ENCODE measurements at regions of chr10 and their contacts with region 1.

Region 1: GRCh38 chr10:63866075-63866746 is 345.0 kb downstream of the REEP3 start:
- DNase-seq: peak; percentile 39
- H3K4me3 Mint-ChIP-seq: no peak overlapping the region
- H3K27ac Mint-ChIP-seq: no peak overlapping the region
- H3K4me1 Mint-ChIP-seq: peaks cover 6% of the 10 kb centered on the region
- H3K27me3 Mint-ChIP-seq: peaks cover 22% of the 10 kb centered on the region

Region 2: GRCh38 chr10:63878428-63878827 is 12.2 kb after region 1 on chr10:
- CTCF ChIA-PET with region 1: interaction called, 13 read pairs
- POLR2A ChIA-PET with region 1: no interaction called
- DNase-seq: no peak
- H3K4me3 Mint-ChIP-seq: no peak overlapping the region
- H3K27ac Mint-ChIP-seq: no peak overlapping the region
- H3K4me1 Mint-ChIP-seq: no peaks in the 10 kb centered on the region
- H3K27me3 Mint-ChIP-seq: peaks cover 11% of the 10 kb centered on the region

Region 3: DNA sequence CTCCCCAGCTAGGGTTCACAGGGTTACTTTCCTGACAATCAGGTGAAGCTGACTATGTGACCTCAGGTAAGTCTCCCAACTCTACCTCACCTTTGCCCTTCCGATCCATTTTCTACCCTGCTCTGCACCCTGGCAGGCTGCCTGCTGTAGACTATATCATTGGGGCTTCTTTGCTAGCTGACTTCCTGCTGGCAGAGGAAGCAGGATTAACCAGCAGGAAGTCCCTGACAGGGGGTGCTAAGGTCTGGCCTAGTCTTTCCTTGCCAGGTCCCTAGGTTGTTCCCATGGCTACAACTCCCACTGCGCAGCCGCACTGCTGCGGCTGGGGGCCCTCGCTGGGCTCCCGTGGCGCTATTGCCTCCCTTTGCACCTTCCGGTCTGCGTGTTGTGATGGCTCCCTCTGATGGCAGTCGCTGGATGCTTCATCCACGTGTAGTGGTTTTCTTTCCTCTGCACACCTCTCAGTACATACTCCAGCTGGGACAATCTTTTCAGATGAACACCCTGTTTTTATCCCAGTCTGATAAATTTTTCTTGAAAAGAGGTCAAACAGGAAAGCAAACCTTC is 20.9 kb after region 1 on chr10:
- CTCF ChIA-PET with region 1: interaction called, 11 read pairs
- POLR2A ChIA-PET with region 1: no interaction called
- DNase-seq: no peak
- H3K4me3 Mint-ChIP-seq: no peak overlapping the region
- H3K27ac Mint-ChIP-seq: no peak overlapping the region
- H3K4me1 Mint-ChIP-seq: no peaks in the 10 kb centered on the region
- H3K27me3 Mint-ChIP-seq: peaks cover 6% of the 10 kb centered on the region

Region 4: GRCh38 chr10:63976538-63976937 is 110.3 kb after region 1 on chr10:
- CTCF ChIA-PET with region 1: interaction called, 18 read pairs
- POLR2A ChIA-PET with region 1: no interaction called
- DNase-seq: peak; percentile 28
- H3K4me3 Mint-ChIP-seq: no peak overlapping the region
- H3K27ac Mint-ChIP-seq: no peak overlapping the region
- H3K4me1 Mint-ChIP-seq: no peaks in the 10 kb centered on the region
- H3K27me3 Mint-ChIP-seq: no peaks in the 10 kb centered on the region

Region 5: DNA sequence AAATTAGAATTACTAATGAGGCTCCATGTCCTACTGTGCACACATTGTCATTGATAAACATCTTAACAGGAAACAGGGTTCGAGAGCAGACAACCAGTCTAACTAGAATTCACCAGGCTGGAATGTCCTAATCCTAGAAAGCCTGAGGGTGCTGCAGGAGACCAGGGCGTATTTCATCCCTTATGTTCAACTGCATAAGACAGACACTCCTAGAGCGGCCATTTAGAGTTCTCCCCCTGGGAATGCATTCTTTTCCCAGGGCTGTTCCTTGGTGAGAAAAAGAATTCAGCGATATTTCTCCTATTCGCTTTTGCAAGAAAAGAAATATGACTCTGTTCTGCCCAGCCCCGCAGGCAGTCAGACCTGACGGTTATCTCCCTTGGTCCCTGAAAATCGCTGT is 140.9 kb after region 1 on chr10:
- CTCF ChIA-PET with region 1: no interaction called
- POLR2A ChIA-PET with region 1: no interaction called
- DNase-seq: no peak
- H3K4me3 Mint-ChIP-seq: no peak overlapping the region
- H3K27ac Mint-ChIP-seq: no peak overlapping the region
- H3K4me1 Mint-ChIP-seq: no peaks in the 10 kb centered on the region
- H3K27me3 Mint-ChIP-seq: no peaks in the 10 kb centered on the region